ENCODE measurements at regions of chr7 and their contacts with region 1.

Region 1: DNA sequence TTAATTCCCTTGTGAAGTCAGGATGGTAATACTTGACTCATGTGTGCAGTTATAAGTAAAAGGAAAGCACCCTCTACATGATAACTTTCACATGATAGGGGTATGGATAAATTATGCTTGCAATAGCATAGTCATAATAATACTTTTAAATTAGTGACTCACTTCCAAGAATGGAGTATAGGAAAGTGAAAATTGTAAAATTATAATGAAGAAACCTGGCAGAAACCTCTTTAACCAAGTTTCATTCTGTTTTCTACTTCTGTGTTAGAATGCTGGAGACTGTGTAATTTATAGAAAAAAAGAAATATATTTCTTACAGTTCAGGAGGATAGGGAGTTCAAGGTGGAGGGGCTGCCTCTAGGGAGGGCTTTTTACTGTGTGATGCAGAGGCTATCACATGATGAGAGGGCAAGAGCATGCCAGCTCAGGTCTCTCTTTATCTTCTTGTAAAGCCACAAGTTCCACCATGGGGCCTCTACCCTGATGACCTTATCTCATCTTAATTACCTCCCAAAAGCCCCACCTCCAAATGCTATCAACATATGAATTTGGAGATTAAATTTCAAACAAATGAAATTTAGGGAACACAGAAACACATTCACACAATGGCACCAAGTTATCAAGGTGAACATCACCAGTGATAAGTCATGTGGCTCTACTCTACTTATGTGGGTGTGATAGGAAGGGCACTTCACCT is 43.2 kb downstream of the HDAC9 start:
- DNase-seq: no peak
- H3K4me3 Mint-ChIP-seq: no peak overlapping the region
- H3K27ac Mint-ChIP-seq: peak overlapping the region; percentile 31
- H3K4me1 Mint-ChIP-seq: peaks cover 7% of the 10 kb centered on the region
- H3K27me3 Mint-ChIP-seq: no peaks in the 10 kb centered on the region

Region 2: DNA sequence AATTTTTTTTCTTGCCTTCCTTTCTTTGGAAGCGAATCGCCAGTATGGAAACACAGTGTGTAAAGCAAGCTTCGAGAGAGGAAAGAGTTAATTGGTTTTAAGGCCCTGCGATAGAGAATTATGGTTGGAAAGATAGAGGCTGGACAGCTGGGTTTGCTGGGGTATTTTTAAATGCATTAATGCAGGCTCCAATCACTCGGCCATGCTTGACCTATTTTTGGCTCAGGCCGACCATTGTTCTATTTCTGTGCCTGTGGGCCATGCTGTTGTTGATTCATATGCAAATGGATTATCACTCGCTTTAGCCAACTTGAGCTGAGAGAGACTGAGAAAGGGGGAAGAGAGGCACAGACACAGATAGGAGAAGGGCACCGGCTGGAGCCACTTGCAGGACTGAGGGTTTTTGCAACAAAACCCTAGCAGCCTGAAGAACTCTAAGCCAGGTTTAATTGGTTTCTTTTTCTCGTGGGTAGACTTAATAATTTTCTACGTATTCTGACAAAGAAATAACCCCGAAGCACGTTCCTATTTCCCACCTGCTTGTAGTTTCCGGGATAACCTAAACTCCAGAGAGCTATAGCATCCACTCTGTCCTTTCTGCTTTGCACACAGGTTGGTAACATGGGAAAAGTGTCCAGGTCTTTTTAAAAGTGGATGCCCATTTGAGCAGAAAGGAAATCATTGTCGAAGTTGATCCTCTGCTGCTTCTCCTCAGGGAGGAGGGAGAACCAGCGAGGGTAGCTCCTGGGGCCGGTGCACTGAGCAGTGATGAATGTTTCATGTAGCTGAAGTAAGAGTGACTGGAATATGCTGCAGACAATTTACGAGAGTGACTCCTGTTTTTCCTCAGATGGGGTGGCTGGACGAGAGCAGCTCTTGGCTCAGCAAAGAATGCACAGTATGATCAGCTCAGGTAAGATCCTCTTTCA is 43.0 kb before region 1 on chr7 and contains the start of gene HDAC9:
- intact Hi-C with region 1: loop called (anchors 1 kb)
- DNase-seq: no peak
- H3K4me3 Mint-ChIP-seq: peak within 1 kb of the TSS; percentile 24
- H3K27ac Mint-ChIP-seq: peak within 1 kb of the TSS; percentile 59
- H3K4me1 Mint-ChIP-seq: peaks cover 15% of the 10 kb centered on the region
- H3K27me3 Mint-ChIP-seq: no peaks in the 10 kb centered on the region
- total RNA-seq, gene HDAC9: 0.48 and 0.52 TPM in 2 replicates

Region 3: DNA sequence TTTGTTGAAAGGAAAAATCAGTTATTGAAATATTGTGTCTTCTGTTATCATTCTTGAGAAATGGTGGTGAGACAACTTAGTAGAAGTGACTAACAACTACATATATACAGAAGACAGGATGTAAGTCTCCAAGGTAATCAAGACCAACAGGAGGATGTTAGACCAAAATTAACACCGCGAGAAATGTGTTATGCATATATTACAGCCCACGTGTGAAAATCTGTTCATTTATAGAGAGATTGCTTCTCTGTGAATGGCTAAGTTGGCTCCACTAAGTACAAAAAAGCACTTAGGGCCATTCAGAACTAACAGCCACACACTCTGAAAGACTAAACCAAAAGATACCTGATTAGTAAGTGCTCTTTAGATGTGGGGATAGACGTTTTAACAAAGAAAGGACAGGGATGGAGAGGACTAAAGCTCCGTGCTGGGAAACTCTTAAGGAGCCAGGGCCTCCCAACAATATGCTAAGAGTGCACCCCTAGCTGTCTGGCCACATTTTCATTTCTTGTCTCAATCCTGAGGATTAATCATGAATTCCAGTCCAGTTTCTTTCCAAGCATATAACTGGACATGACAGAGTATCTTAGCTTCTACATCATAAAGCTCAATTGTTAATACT is 16.6 kb before region 1 on chr7:
- intact Hi-C with region 1: loop called (anchors 1 kb)
- DNase-seq: no peak
- H3K4me3 Mint-ChIP-seq: no peak overlapping the region
- H3K27ac Mint-ChIP-seq: peak overlapping the region; percentile 73
- H3K4me1 Mint-ChIP-seq: no peaks in the 10 kb centered on the region
- H3K27me3 Mint-ChIP-seq: no peaks in the 10 kb centered on the region